ENCODE measurements at regions of chr18 and their contacts with region 1.

Region 1: DNA sequence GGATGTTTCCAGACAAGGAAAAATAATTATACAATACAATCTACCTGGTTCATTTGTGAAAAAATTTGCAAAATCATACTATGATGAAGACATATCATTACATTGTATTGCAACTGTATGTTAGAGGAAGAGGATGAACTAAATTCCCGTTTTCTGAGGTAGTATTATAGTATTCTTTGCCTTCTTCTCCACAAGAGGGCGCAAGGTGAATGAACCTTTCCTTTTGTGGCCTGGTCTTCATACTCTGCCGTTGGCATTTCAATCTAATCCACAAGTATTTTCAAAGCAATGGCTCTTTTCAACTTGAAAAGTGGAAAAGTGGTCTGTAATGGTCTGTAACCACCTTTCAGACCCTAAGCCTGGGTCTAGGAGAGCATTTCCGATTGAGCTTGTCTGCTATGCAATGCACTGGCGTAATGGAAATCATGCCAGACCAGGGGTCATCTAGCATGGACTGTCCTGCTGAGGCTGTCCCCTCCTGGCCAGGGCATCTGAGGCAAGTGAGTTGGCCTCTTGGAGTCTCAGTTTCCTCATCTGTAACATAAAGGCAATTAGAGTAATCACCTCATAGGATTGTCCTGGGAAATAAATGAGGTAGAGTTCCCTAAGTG is 30.8 kb upstream of the ZNF396 start:
- DNase-seq: peak in 2 of 5 donors; percentile 47 to 49
- ATAC-seq: peak in 3 of 4 donors; percentile 80 to 88 (median 86)
- H3K4me3 ChIP-seq: no peak overlapping the region
- H3K27ac ChIP-seq: no peak overlapping the region
- H3K4me1 ChIP-seq: peaks cover 0 to 14% (median 1%) of the 10 kb centered on the region in 12 donors
- H3K27me3 ChIP-seq: no peaks in the 10 kb centered on the region
- CTCF ChIP-seq: peak; percentile 60 to 89 (median 82)
- POLR2A ChIP-seq: no peak

Region 2: GRCh38 chr18:35491700-35492077 is 83.7 kb after region 1 on chr18:
- intact Hi-C with region 1: loop called in 5 of 10 experiments (anchors 2 to 5 kb)
- DNase-seq: no peak
- ATAC-seq: peak; percentile 48 to 83 (median 58)
- H3K4me3 ChIP-seq: no peak overlapping the region
- H3K27ac ChIP-seq: peak overlapping the region in 5 of 12 donors; percentile 27 to 56 (median 48)
- H3K4me1 ChIP-seq: peaks cover 0 to 43% (median 22%) of the 10 kb centered on the region in 12 donors
- H3K27me3 ChIP-seq: no peaks in the 10 kb centered on the region
- CTCF ChIP-seq: no peak
- POLR2A ChIP-seq: no peak

Region 3: GRCh38 chr18:35573531-35573930 is 165.6 kb after region 1 on chr18:
- intact Hi-C with region 1: loop called in 3 of 10 experiments (anchors 5 to 10 kb)
- DNase-seq: no peak
- ATAC-seq: peak in 1 of 4 donors; percentile 27
- H3K4me3 ChIP-seq: no peak overlapping the region
- H3K27ac ChIP-seq: no peak overlapping the region
- H3K4me1 ChIP-seq: peaks cover 0 to 8% (median 0%) of the 10 kb centered on the region in 12 donors
- H3K27me3 ChIP-seq: no peaks in the 10 kb centered on the region
- CTCF ChIP-seq: no peak
- POLR2A ChIP-seq: no peak

Region 4: DNA sequence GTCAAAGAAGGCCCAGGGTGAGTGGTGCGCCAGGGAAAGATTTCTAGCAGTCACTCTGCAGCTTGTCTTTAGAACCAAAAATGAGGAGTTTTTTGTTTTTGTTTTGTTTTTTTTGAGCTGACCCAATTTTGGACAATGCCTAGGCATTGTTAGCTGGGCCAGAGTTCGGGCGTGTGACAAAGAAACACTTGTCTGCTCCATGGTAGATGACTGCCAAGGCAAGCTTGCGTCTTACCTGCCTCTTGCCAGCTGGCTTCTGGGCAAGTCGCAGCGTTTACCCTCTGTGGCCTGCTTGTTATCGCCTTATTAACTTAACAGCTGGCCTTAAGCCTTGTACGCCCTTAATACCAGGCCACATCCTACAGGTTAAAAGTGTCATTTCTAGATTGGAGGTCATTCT is 287.8 kb after region 1 on chr18:
- intact Hi-C with region 1: loop called in 1 of 10 experiments (anchors 10 kb)
- DNase-seq: peak; percentile 62 to 87 (median 74)
- ATAC-seq: peak; percentile 94 to 98 (median 96)
- H3K4me3 ChIP-seq: no peak overlapping the region
- H3K27ac ChIP-seq: peak overlapping the region in 11 of 12 donors; percentile 22 to 72 (median 48)
- H3K4me1 ChIP-seq: peaks cover 0 to 18% (median 12%) of the 10 kb centered on the region in 12 donors
- H3K27me3 ChIP-seq: no peaks in the 10 kb centered on the region
- CTCF ChIP-seq: no peak
- POLR2A ChIP-seq: no peak

Region 5: DNA sequence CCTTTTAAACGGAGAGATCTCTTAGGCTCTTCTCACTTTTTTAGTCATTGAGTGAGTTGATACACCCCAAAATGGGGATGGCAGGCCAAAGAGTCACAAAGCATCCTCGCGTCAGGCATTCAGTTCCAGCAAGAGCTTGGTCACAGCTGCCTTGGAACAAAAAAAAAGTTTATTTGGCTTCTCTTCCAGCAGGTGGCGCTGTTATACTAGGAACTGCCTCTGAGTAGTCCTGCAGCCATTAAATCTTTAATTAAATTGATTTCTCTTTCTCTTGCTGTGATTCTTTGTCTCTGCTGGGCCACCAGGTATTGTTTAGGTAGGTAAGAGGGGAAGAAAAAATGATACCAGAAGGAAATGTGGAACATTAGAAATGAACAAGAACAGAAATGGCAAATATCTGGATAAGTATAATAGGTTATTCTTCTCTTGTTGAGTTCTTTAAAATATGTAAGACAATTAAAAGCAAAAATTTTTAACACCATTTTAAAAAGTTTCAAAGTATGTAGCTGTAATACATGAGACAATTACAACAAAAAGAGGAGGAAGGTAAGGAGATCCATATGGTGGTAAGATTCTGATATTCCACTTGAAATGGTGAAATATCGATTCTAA is 348.6 kb after region 1 on chr18:
- intact Hi-C with region 1: loop called in 1 of 10 experiments (anchors 10 kb)
- DNase-seq: peak in 2 of 5 donors; percentile 50 to 59
- ATAC-seq: peak in 3 of 4 donors; percentile 75 to 85 (median 79)
- H3K4me3 ChIP-seq: no peak overlapping the region
- H3K27ac ChIP-seq: no peak overlapping the region
- H3K4me1 ChIP-seq: no peaks in the 10 kb centered on the region
- H3K27me3 ChIP-seq: no peaks in the 10 kb centered on the region
- CTCF ChIP-seq: peak; percentile 71 to 89 (median 86)
- POLR2A ChIP-seq: no peak

Measured in heart left ventricle (tissue), 16 donors.